Heart left ventricle (tissue), 16 donors: ENCODE measurements at regions of chr21 and their contacts with region 1.

Region 1: DNA sequence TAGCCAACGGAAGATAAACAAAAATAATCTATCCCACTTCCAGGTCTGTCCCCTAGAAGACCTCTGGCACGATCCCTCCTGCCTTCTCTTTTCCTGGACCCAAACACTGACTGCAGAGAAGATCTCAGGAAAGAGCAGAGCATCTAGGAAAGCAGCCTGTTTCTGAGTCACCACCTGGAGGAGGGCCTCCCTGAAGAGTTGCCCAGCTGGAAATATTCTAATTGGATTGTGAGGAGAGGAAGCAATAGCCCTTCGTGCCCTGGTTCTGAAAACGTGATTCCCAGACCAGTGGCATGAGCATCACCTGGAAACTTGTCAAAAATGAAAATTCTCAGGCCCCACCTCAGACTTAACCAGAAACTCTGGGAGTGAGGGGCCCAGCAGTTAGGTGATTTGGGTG is 411.1 kb downstream of the SETD4 start:
- DNase-seq: peak in 1 of 5 donors; percentile 28
- ATAC-seq: peak in 3 of 4 donors; percentile 30 to 61 (median 31)
- H3K4me3 ChIP-seq: no peak overlapping the region
- H3K27ac ChIP-seq: no peak overlapping the region
- H3K4me1 ChIP-seq: peaks cover 0 to 4% (median 0%) of the 10 kb centered on the region in 12 donors
- H3K27me3 ChIP-seq: no peaks in the 10 kb centered on the region
- CTCF ChIP-seq: no peak
- POLR2A ChIP-seq: no peak

Region 2: DNA sequence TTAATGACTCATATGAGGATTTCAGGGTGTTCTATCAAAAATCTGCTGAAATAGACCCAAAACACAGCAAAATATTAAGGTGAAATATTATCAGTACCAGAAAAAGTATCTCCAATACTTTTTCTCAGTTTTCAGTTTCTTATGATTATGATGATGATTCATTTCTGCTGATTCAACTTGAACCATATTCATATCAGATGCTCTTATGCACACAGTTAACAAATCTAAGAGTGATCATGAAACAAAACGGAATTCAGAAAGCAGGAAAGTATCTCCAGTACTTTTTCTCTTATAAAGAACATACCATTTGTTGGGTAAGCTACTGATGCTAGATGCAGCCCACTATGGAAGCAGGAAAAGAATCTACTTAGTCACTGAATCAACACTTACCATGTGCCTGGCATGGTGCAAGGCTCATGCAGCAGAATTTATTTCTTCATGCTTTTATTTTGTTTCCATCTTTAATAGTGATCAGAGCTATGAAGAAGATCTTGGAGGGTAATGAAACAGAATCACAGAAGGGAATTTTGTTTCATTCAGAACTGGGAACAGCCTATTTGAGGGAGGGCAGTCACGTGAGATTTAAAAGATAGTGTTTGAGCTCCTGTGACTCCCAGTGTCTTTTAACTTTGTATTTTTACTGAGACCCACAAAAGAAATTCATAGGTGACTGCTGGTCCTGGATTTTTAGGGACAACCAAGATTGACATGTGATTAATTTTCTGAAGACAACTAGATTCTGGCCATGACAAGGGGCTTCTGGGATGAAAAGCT is 69.5 kb before region 1 on chr21:
- intact Hi-C with region 1: loop called in 1 of 10 experiments (anchors 10 kb)
- DNase-seq: no peak
- ATAC-seq: no peak
- H3K4me3 ChIP-seq: no peak overlapping the region
- H3K27ac ChIP-seq: no peak overlapping the region
- H3K4me1 ChIP-seq: peaks cover 0 to 12% (median 0%) of the 10 kb centered on the region in 12 donors
- H3K27me3 ChIP-seq: peaks cover 0 to 4% (median 0%) of the 10 kb centered on the region in 9 donors
- CTCF ChIP-seq: no peak
- POLR2A ChIP-seq: no peak